ENCODE measurements at regions of chr12 and their contacts with region 1.

Region 1: GRCh38 chr12:55847603-55848291 is 5.0 kb upstream of the MMP19 start:
- DNase-seq: peak; percentile 84 to 92
- ATAC-seq: peak; percentile 93 to 98 (median 96)
- H3K4me3 ChIP-seq: peak overlapping the region in 7 of 10 donors; percentile 8 to 40 (median 27)
- H3K27ac ChIP-seq: peak overlapping the region; percentile 81 to 96 (median 89)
- H3K4me1 ChIP-seq: peaks cover 0 to 60% (median 19%) of the 10 kb centered on the region in 9 donors
- H3K27me3 ChIP-seq: peaks cover 0 to 5% (median 0%) of the 10 kb centered on the region in 7 donors
- CTCF ChIP-seq: no peak

Region 2: DNA sequence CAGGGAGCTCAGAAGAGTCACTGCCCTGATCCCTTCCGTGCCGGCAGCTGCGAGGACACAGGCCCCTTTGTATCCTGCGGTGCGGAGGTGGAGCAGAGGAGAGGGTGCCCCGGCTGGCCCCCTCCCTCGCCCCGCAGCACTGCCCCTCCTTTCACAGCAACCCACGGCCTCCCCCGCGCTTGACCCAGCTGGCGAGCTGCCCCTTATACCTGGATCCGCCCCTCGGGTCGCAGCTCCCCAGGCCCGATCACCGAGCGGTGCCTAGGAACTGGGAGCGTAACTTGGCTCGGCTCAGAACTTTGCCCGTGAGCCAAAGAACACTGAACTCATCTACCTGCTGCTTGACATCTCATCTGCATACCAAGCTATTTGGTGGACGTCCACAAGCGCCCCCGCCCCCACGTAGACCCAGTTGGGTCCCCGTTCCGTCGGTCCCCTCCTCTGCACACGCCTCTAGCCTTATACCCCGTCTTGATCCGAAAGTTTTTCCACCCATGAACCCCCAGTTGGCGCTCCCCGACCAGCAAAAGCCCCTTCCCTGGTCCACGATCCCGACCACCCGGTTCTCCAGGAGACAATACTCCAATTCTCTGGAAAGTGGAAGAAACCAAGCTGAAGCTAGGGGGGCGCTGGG is 17.7 kb before region 1 on chr12:
- intact Hi-C with region 1: loop called in 1 of 10 experiments (anchors 2 kb)
- DNase-seq: peak; percentile 44 to 62
- ATAC-seq: peak; percentile 28 to 65 (median 34)
- H3K4me3 ChIP-seq: peak overlapping the region; percentile 63 to 98 (median 85)
- H3K27ac ChIP-seq: peak overlapping the region; percentile 85 to 96 (median 92)
- H3K4me1 ChIP-seq: peaks cover 10 to 57% (median 50%) of the 10 kb centered on the region in 9 donors
- H3K27me3 ChIP-seq: no peaks in the 10 kb centered on the region
- CTCF ChIP-seq: no peak

Region 3: DNA sequence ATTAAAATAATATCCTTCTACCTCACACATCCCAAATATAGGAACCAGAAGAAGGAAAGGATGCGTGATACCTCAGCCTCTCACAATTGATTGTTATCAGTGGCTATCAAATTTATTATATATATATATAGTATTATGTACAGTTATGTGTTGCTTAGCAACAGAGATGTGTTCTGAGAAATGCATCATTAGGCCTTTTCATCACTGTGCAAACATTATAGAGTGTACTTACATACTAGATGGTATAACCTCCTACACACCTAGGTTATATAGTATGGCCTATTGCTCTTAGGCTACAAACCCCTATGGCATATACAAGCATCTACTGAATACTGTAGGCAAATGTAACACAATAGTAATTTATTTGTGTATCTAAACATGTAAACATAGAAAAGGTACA is 46.0 kb after region 1 on chr12:
- intact Hi-C with region 1: loop called in 1 of 10 experiments (anchors 5 kb)
- DNase-seq: no peak
- ATAC-seq: no peak
- H3K4me3 ChIP-seq: no peak overlapping the region
- H3K27ac ChIP-seq: no peak overlapping the region
- H3K4me1 ChIP-seq: no peaks in the 10 kb centered on the region
- H3K27me3 ChIP-seq: no peaks in the 10 kb centered on the region
- CTCF ChIP-seq: no peak

Region 4: DNA sequence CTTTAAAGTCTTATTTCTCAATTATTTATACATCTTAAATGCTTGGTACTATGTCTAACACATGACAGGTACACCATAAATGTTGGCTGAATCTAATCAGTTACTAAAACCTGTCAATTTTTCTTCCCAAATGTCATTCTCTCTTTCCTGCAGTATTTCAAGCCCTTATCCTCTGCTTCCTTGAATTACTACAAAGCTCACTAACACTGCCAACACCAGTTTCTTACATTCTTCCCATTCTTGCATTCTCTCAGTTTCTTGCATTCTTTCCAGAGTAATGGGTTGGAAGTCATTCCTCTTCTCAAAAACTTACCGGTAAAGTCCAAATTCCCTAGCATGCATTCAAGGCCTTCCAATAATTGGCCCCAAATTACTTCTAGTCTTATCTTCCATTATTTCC is 351.1 kb after region 1 on chr12:
- intact Hi-C with region 1: no loop called
- DNase-seq: no peak
- ATAC-seq: no peak
- H3K4me3 ChIP-seq: no peak overlapping the region
- H3K27ac ChIP-seq: no peak overlapping the region
- H3K4me1 ChIP-seq: peaks cover 0 to 5% (median 0%) of the 10 kb centered on the region in 9 donors
- H3K27me3 ChIP-seq: no peaks in the 10 kb centered on the region
- CTCF ChIP-seq: no peak